Right ventricle myocardium inferior (tissue), 1 donor: ENCODE measurements at regions of chr16 and their contacts with region 1.

Region 1: DNA sequence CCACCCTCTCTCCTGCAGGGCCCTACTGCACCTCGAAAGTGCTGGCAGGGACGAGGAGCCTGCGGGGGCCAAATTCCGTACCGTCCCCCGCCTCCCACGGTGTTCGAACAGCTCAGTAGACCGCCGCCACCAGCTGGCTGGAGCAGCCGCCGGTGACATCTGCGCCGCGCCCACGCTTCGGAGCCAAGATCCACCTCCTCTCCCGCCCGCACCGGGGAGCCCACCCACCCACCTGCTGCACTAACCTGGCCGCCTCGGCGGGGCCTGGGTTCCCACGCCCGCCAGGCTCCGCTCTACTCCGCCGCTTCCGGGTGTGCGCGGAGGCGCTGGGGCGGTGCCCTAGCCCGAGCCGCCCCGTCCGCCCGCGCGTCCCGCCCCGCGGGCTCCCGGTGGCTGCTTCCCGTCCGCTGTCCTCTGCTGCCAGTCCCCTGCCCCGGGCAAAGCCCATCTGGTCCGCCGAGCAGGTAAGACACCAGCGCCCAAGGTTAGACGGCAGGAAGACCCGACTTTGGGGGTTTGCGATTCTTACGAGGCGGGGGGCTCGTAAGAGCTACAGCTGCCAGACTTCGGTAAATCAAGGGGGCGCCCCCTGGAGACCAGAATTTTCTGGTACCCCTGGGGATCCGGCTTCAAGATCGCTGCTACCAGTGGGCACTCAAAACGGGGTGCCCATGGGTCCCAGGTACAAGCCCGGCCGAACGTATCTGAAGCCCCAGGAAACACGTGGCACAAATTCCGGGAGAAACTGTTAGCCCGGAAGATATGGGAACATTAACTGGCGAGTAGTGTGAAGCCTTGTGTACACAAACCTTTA is at the starts of genes FBXL8 and TRADD:
- DNase-seq: peak; percentile 92
- ATAC-seq: peak; percentile 69
- total RNA-seq, gene FBXL8: 10.8 TPM
- total RNA-seq, gene TRADD: 8.2 TPM

Region 2: DNA sequence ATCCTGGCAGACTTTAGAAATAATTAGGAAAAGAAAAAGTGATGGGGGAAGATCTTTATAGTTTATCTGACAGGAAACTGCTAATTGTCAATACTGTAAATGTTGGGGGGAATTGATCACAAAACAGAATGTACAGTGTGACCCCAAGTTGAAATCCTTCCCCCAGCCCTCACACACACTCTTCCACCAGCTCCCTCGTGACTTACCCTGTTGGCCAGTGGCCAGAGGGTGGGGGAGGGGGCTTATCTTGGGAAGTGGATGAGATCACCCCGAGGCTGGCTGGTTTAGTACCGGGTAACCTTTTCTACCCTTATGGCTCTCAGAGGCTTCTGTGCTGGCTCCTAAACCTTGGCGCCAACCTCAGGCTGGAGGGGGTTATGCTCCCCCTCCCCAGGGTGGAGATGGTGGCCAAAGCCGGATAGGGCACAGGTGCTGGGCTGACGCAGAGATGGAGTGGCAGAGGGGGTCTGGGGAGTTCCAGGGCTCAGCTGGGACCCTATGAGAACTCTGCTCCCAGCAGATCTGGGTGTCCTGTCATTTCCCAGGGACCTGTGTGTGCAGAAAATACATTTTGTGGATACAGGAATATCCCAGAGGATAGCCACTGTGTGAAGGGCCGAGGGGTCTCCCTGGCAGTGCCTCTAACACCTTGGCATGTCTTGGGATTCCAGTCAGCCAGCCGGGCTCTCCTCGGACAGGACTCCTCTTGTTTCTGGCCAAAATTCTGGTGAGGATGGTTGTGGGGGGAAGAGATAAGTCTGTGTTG is 259.7 kb before region 1 on chr16:
- intact Hi-C with region 1: loop called (anchors 1 kb)
- DNase-seq: no peak
- ATAC-seq: no peak

Region 3: DNA sequence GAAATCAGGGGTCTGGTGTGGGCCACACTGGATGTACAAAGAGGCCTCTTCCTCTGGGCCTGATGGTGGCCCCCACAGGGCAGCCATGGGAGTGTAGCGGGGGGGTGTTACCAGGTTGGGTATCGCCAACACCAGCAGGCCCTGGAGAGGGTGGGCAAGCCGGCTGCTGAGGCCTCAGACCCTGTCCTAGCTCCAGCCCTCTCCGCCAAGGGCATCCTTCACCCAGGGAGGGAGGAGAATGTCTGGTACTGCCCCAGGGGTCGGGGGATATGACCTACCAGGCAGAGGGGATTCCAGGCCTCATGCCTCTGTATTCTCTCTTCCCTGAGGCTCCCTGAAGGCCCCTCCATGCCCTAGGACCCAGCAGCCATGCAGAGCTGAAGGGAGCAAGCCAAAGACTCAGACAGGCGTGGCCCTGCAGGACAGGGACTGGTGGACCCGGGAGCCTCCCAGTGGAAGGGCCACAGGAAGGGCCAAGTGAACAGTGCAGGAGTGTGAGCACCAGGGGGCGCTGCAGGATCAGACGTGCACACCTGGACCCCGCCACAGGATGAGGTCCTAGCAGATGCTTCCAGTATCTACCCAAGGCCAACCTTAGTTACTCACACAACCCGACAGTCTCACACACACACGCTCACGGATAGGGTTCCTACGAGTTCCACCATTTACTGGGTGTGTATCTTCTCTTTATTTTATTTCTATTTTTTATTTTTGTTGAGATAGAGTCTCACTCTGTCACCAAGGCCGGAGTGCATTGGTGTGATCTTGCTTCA is 182.3 kb before region 1 on chr16:
- intact Hi-C with region 1: loop called (anchors 1 kb)
- DNase-seq: peak; percentile 94
- ATAC-seq: peak; percentile 96

Region 4: DNA sequence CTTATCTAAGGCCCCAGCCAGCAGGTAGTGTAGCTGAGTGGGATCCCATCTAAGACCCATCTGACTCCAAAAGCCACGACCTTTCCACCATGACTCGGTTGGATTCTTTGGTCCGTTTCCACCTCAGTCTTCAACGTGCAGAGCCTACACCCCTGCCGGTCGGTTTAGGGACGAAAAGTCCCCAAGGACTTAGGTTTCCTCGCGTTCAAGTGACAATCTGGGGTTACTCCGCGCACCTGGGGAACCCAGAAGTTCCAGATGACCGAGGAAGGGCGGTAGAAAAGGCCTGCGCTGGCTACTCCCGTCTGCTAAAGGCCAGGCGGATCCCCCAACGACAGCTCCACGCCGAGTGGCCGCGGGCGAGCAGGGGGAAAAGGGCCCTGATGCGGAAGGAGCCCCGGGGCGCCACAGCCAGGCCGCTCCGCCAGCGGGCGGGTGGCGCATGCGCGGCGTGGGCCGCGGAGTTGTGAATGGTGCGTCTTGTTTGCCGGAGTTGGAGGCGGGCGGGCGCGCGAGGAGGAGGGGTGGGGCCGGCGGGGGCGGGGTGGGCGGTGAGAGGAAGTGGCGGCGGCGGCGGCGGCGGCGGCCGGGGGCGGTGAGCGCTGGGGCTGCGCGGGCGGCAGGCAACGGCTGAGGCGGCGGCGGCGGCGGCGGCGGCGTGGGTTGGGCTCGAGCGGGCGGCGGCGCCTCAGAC is 131.1 kb before region 1 on chr16 and contains the start of gene CBFB:
- intact Hi-C with region 1: loop called (anchors 5 kb)
- DNase-seq: peak; percentile 97
- ATAC-seq: peak; percentile 95
- total RNA-seq, gene CBFB: 22.0 TPM

Region 5: DNA sequence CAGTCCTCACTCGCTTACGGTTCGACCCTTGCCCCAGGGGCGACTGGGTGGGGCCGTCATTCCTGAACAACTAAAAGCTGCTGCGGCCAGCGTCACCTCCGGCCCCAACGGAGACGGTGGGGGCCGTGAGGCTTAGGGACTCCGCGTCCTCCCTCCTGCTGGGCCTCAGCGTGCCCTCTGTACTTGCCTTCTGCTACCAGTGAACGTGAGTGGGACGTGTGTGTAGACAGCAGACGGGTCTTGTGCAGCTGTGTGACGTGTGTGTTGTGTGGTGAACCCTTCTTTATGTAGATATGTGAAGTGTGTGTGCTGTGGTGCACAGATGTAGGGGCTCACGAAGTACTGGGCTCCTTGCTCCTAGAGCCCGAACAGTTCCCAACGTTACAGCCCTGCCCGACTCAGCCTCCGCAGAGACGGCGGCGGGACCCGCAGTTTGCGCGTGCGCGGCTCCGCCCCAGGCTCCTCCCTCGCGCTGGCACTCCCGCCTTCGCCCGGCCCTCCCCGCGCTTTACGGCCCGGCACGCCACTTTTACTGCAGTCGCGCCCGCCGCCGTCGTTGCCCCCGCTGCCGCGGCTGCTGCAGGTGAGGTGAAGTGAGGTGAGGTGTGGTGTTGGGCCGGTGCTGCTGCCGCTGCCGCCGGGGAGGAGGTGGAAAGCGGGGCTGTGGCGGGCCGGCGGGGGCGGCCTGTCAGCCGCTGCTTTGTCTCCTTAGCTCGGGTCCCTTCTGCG is 50.2 kb before region 1 on chr16 and contains the start of gene PHAF1:
- intact Hi-C with region 1: loop called (anchors 5 kb)
- DNase-seq: peak; percentile 96
- ATAC-seq: peak; percentile 98
- total RNA-seq, gene PHAF1: 10.8 TPM

Region 6: GRCh38 chr16:67183627-67184328 is 24.0 kb after region 1 on chr16 and contains the start of gene MATCAP1:
- intact Hi-C with region 1: loop called (anchors 2 kb)
- DNase-seq: peak; percentile 97
- ATAC-seq: peak; percentile 96
- total RNA-seq, gene MATCAP1: 9.8 TPM